Transverse colon (tissue), 4 donors: ENCODE measurements at regions of chr18 and their contacts with region 1.

Region 1: GRCh38 chr18:79429785-79430281 is 34.1 kb downstream of the NFATC1 start:
- DNase-seq: no peak
- H3K4me3 ChIP-seq: no peak overlapping the region
- H3K27ac ChIP-seq: no peak overlapping the region
- H3K4me1 ChIP-seq: no peaks in the 10 kb centered on the region
- H3K27me3 ChIP-seq: no peaks in the 10 kb centered on the region
- CTCF ChIP-seq: no peak
- EP300 ChIP-seq: no peak
- POLR2A ChIP-seq: no peak

Region 2: GRCh38 chr18:78932281-78932680 is 497.6 kb before region 1 on chr18:
- in situ Hi-C with region 1: no loop called
- intact Hi-C with region 1: loop called (anchors 5 kb)
- DNase-seq: no peak
- H3K4me3 ChIP-seq: no peak overlapping the region
- H3K27ac ChIP-seq: no peak overlapping the region
- H3K4me1 ChIP-seq: no peaks in the 10 kb centered on the region
- H3K27me3 ChIP-seq: no peaks in the 10 kb centered on the region
- CTCF ChIP-seq: no peak
- EP300 ChIP-seq: no peak
- POLR2A ChIP-seq: no peak

Region 3: GRCh38 chr18:79186649-79187048 is 243.2 kb before region 1 on chr18:
- in situ Hi-C with region 1: no loop called
- intact Hi-C with region 1: no loop called
- DNase-seq: no peak
- H3K4me3 ChIP-seq: no peak overlapping the region
- H3K27ac ChIP-seq: no peak overlapping the region
- H3K4me1 ChIP-seq: no peaks in the 10 kb centered on the region
- H3K27me3 ChIP-seq: no peaks in the 10 kb centered on the region
- CTCF ChIP-seq: no peak
- EP300 ChIP-seq: no peak
- POLR2A ChIP-seq: no peak